ENCODE measurements at regions of chr14 and their contacts with region 1.

Region 1: GRCh38 chr14:71783085-71783484 is 149.1 kb upstream of the RGS6 start:
- DNase-seq: no peak
- H3K4me3 Mint-ChIP-seq: no peak overlapping the region
- H3K27ac Mint-ChIP-seq: no peak overlapping the region
- H3K4me1 Mint-ChIP-seq: no peaks in the 10 kb centered on the region
- H3K27me3 Mint-ChIP-seq: peaks cover 5% of the 10 kb centered on the region

Region 2: DNA sequence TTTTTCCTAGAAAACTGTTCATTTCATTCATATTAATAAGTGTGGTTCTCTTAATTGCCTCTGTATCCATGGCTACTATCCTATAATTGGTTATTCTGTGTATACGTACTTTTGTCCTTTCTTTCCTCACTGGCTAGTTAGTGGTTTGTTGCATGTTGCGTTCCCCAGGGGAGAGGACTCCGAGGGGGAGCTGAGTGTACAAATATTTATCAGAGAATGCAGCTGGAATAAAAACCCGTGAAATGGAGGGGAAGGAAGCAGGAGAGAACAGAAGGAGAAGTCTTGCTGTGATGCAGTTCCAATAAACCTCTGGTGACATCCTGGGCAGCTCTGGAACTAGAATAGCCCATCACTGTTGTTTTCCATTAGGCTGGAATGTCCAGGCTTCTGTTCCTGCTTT is 32.0 kb after region 1 on chr14:
- intact Hi-C with region 1: loop called (anchors 2 kb)
- DNase-seq: no peak
- H3K4me3 Mint-ChIP-seq: no peak overlapping the region
- H3K27ac Mint-ChIP-seq: no peak overlapping the region
- H3K4me1 Mint-ChIP-seq: no peaks in the 10 kb centered on the region
- H3K27me3 Mint-ChIP-seq: peaks cover 14% of the 10 kb centered on the region

Measured in activated T-helper 1 cell treated with anti-CD3 and anti-CD28 coated beads, Interleukin-12 subunit alpha, Interleukin-12 subunit beta, Interleukin-2, Interleukin-4 antibody, amounts not matched to agents 30 ng/mL and 10 ng/mL and 1 ng/mL, durations not matched to agents 14 hours and 24 hours and 36 hours (primary cell).